Tibial artery (tissue), 4 donors: ENCODE measurements at regions of chr14 and their contacts with region 1.

Region 1: DNA sequence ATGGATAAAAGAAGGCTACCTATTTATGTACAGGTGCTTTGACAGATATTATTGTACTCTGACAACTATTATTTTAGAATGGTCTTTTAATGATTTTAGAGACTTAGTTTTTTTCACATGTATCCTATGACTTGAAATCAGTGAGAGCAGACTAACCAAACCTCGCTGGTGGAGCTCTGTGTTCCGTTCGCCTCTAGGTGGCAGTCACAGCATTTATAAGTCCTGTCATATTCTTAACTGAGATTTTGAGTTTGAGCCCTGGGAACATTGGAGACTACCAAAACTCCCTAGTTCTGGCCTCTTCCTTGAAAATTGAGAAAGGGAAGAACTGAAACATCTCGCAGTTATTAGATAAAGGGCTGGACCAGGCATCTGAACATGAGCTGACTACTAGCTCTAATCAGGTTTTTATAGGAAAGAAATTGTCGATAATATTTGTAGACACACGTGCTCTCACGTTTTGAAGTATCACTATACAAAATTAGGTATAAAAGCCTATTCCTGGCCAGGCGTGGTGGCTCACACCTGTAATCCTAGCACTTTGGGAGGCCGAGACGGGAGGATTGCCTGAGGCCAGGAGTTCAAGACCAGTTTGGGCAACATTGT is 48.3 kb downstream of the TTLL5 start:
- DNase-seq: peak; percentile 80 to 82
- H3K4me3 ChIP-seq: no peak overlapping the region
- H3K27ac ChIP-seq: no peak overlapping the region
- H3K4me1 ChIP-seq: peaks cover 0 to 15% (median 11%) of the 10 kb centered on the region in 4 donors
- H3K27me3 ChIP-seq: no peaks in the 10 kb centered on the region
- CTCF ChIP-seq: peak; percentile 77 to 81

Region 2: GRCh38 chr14:75542588-75543091 is 166.7 kb before region 1 on chr14:
- intact Hi-C with region 1: no loop called
- DNase-seq: peak; percentile 78 to 79
- H3K4me3 ChIP-seq: no peak overlapping the region
- H3K27ac ChIP-seq: peak overlapping the region in 1 of 2 donors; percentile 21
- H3K4me1 ChIP-seq: no peaks in the 10 kb centered on the region
- H3K27me3 ChIP-seq: no peaks in the 10 kb centered on the region
- CTCF ChIP-seq: no peak

Region 3: GRCh38 chr14:76181546-76181945 is 472.2 kb after region 1 on chr14:
- intact Hi-C with region 1: loop called (anchors 10 kb)
- DNase-seq: no peak
- H3K4me3 ChIP-seq: no peak overlapping the region
- H3K27ac ChIP-seq: no peak overlapping the region
- H3K4me1 ChIP-seq: no peaks in the 10 kb centered on the region
- H3K27me3 ChIP-seq: no peaks in the 10 kb centered on the region
- CTCF ChIP-seq: no peak